ENCODE measurements at regions of chr6 and their contacts with region 1.

Region 1: DNA sequence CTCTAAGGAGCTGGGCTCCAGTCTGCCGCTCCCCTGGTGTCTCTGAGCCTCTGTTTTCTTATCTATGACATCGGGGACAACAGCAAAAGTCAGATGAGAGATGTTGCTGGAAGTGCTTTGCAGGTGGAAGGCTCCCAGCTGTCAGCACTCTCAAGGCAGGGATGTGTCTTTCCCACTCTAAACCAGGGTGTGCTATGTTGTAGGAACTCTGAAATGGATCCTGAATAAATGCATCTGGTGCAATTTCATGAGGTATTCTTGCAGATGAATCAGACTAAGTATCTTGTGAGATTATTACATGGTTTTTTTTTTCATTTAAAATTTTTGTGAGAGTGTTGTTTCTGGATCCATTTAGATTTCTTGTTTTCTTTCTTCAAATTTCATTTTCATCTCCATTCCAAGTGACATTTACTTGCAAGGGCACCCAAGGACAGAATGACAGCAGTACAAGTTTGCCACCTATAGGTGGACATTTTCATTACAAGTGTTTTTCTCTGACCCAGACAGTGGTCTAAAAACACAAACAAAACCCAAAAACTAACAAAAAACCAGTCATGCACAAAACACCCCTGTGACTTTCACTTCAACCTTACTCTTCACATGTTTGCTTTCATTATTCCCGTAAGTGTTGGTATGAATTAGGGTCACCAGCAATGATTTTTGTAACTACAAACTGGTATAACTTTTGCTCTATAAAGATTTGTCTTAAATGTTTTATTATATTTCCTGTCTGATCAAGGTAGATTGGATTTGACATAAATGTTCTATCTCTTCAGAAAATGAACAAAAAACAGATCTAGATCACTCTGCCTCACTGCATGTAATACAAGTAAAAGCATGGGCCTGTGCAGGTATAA is 14.7 kb upstream of the SIM1 start:
- DNase-seq: no peak
- ATAC-seq: no peak
- H3K4me3 ChIP-seq: no peak overlapping the region
- H3K27ac ChIP-seq: no peak overlapping the region
- H3K4me1 ChIP-seq: no peaks in the 10 kb centered on the region
- H3K27me3 ChIP-seq: no peaks in the 10 kb centered on the region

Region 2: GRCh38 chr6:100116411-100117194 is 362.8 kb before region 1 on chr6:
- intact Hi-C with region 1: loop called (anchors 1 to 2 kb)
- DNase-seq: no peak
- ATAC-seq: no peak
- H3K4me3 ChIP-seq: no peak overlapping the region
- H3K27ac ChIP-seq: no peak overlapping the region
- H3K4me1 ChIP-seq: no peaks in the 10 kb centered on the region
- H3K27me3 ChIP-seq: no peaks in the 10 kb centered on the region

Region 3: DNA sequence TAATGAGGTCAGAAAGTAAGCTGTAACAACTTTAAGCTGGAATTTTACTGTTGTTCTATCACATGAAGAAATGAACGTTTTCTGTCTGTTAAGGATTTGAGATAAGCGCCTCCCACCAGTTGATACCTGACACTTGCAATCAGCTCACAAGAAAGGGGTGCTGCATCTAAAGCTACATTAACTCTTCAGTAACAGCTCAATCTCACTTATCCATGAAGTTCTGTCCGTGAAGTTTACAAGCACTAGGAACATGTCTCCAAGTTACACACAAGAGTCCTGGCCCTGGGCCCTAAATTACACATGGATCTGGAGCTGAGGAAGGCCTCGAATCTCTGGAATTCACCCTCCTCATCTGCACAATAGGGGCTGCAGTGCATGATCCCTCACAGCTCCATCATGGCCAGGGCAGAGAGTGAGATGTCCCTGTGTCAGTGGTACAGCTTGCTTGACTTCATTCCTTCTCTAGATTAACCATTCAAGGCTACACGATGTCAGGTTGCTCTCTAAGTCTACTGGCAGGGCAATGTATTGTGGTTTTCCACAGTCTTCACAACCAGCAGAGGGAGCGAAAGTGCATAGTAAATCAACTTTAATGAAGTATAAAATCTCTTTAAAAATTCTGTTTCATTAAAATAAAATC is 303.0 kb before region 1 on chr6:
- intact Hi-C with region 1: loop called in 1 of 2 experiments (anchors 2 kb)
- DNase-seq: no peak
- ATAC-seq: peak; percentile 73
- H3K4me3 ChIP-seq: no peak overlapping the region
- H3K27ac ChIP-seq: no peak overlapping the region
- H3K4me1 ChIP-seq: peaks cover 3 to 4% of the 10 kb centered on the region in 2 donors
- H3K27me3 ChIP-seq: no peaks in the 10 kb centered on the region

Measured in aorta (tissue), 5 donors.